ENCODE measurements at regions of chr7 and their contacts with region 1.

Region 1: DNA sequence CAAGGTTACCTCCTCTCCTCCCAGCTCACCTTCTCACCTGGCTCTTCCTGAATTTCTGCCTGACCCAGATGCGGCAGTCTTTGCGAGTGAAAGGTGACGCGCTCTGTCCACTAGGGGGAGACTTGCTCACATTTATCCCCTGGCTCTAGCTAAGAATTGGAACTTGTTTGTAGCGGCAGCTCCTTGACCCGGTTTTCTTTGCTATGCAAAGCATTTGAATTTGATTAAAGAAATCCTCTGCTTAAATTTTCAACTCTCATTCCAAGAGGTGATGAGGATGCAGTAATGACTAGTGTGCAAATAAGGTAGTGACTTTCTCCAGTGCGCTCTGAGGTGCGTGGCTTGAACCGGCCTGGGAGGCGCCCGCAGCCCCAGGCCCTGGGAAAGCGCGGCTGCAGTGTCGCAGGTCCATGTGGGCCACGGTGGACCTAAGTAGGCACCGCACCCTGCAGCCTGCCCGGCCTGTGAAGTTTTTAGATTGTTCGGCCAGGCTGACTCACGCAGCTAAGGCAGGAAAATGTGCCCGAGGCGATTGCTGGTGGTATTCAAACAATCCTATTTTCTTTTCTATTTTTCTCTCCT is 336.9 kb upstream of the NPSR1 start:
- DNase-seq: peak; percentile 27
- H3K4me3 ChIP-seq: peak overlapping the region; percentile 14; the same call in 1 of the 2 replicates
- H3K27ac ChIP-seq: no peak overlapping the region
- H3K27me3 ChIP-seq: no peaks in the 10 kb centered on the region
- CTCF ChIP-seq: peak; percentile 92

Region 2: GRCh38 chr7:34158368-34159155 is 162.5 kb before region 1 on chr7:
- CTCF ChIA-PET with region 1: interaction called, 10 read pairs
- POLR2A ChIA-PET with region 1: no interaction called
- DNase-seq: no peak
- H3K4me3 ChIP-seq: no peak overlapping the region
- H3K27ac ChIP-seq: no peak overlapping the region
- H3K27me3 ChIP-seq: no peaks in the 10 kb centered on the region
- CTCF ChIP-seq: peak; percentile 20; the same call in 1 of the 2 replicates

Region 3: DNA sequence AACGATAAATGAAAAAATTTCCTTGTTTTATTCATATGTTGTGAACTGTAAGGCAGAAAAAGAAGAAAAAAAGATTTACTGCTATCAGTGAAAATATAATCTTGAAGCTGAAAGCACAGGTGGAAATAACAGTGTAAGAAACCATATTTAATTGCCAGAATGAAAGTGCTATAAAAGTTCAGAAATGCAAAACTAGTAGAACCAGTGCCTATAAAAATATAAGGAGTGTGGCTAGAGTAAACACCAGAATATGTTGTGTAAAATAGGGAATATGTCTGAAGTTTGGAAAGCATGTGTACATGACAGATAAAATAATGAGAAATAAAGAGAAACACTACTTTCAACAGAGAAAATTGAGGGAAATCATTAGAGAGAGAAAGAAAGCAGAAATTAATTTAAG is 13.6 kb before region 1 on chr7:
- CTCF ChIA-PET with region 1: interaction called, 11 read pairs
- POLR2A ChIA-PET with region 1: no interaction called
- DNase-seq: no peak
- H3K4me3 ChIP-seq: no peak overlapping the region
- H3K27ac ChIP-seq: no peak overlapping the region
- H3K27me3 ChIP-seq: no peaks in the 10 kb centered on the region
- CTCF ChIP-seq: no peak

Measured in AG04450 (cell line).